Aorta (tissue), 5 donors: ENCODE measurements at regions of chr15 and their contacts with region 1.

Region 1: DNA sequence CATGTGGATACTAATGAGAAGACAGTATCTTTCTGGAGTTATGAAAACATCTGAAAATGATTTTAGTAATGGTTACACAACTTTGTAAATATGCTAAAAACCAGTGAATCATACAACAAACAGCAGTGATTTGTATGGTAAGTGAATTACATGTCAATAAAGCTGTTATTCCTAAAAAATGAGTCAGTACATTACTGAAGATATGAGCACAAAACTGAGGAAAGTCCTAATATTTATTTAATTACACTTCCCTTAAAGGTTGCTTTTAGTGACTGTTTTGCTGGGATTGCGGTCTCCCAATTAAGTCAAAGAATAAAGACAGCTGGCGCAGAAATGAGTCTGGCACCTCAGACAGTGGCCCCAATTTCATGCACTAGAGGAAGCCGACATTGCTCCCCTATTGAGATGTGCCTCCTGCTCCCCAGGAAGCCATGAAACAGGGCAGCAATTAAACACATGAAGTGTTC is 50.9 kb upstream of the FSIP1 start:
- DNase-seq: no peak
- ATAC-seq: no peak
- H3K4me3 ChIP-seq: no peak overlapping the region
- H3K27ac ChIP-seq: no peak overlapping the region
- H3K4me1 ChIP-seq: peaks cover 0 to 3% of the 10 kb centered on the region in 2 donors
- H3K27me3 ChIP-seq: no peaks in the 10 kb centered on the region

Region 2: GRCh38 chr15:39666677-39667076 is 166.9 kb before region 1 on chr15:
- intact Hi-C with region 1: no loop called
- DNase-seq: no peak
- ATAC-seq: no peak
- H3K4me3 ChIP-seq: no peak overlapping the region
- H3K27ac ChIP-seq: no peak overlapping the region
- H3K4me1 ChIP-seq: peaks cover 0 to 4% of the 10 kb centered on the region in 2 donors
- H3K27me3 ChIP-seq: no peaks in the 10 kb centered on the region

Region 3: DNA sequence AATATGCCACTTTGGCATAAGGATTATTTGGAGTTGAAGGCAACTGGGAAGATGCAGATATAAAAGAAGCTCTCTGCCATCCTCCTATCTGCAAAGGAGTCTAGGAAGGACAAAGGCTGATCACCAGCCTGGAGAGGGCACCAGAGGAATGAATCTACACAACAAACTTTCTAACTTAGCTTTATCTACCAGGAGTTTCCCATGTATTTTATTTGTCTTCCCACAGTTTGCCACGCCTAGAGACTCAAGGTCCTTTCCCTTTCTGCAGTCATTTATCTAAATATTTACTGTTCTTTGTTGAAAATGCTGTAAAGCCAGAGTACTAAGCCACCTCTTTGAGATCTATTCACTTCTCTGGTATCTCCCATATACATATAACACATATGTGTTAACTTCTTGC is 54.3 kb after region 1 on chr15:
- intact Hi-C with region 1: loop called in 1 of 2 experiments (anchors 10 kb)
- DNase-seq: no peak
- ATAC-seq: no peak
- H3K4me3 ChIP-seq: no peak overlapping the region
- H3K27ac ChIP-seq: no peak overlapping the region
- H3K4me1 ChIP-seq: peaks cover 0 to 2% of the 10 kb centered on the region in 2 donors
- H3K27me3 ChIP-seq: no peaks in the 10 kb centered on the region